ENCODE measurements at regions of chr22 and their contacts with region 1.

Region 1: DNA sequence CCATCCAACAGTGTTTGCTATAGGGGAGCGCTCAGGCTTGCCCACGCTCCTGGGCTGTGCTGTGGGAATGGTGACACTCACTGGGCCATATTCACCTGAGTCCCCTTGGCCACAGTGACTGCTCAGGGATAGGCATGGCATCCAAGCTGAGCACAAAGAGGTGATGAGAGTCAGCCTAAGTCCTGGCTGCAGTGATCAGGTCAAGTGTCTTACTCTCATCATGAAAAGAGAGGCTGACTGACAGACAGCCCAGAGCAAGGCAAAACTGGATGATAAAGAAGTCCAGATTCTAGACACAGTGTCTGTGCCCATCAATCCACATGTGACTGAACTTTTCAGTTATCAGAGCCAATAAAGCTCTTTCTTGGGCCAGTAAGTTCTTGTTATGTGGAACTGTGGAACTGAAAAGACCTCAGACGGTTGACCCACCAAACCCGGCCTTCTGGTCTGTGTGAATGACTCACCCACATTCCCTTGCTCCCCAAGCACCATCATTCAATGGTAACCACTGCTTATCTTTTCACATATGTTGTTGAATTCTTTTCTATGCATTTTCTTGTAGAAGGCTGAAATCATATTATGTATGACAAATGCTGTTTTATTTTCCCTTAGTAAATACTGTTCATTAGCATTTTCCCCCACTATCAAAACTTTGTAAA is 43.2 kb upstream of the YPEL1 start:
- DNase-seq: no peak
- H3K4me3 ChIP-seq: no peak overlapping the region
- H3K27ac ChIP-seq: no peak overlapping the region
- H3K4me1 ChIP-seq: peaks cover 6 to 10% (median 7%) of the 10 kb centered on the region in 4 donors
- H3K27me3 ChIP-seq: no peaks in the 10 kb centered on the region
- CTCF ChIP-seq: no peak
- EP300 ChIP-seq: no peak
- POLR2A ChIP-seq: no peak

Region 2: DNA sequence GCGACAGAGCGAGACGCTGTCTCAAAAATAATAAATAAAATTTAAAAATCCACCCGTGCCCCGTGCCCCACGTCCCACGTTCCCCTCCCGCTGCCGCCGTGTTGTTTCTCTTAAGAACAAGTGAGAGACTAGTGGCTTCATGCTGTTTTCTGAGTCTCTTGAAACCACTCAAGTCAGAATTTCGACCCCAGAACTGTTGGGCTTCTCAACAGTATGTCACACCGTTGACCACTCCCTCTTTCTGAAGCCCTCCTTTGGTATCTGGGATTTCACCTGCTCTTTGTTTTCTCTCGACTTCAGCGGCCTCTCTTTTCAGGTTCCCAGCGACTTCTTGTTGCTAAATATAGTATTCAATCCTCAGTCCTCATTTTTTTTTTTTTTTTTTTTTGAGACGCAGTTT is 112.0 kb before region 1 on chr22:
- intact Hi-C with region 1: no loop called
- DNase-seq: no peak
- H3K4me3 ChIP-seq: peak overlapping the region; percentile 73 to 85 (median 80)
- H3K27ac ChIP-seq: peak overlapping the region; percentile 87 to 92 (median 91)
- H3K4me1 ChIP-seq: peaks cover 8 to 22% (median 18%) of the 10 kb centered on the region in 4 donors
- H3K27me3 ChIP-seq: no peaks in the 10 kb centered on the region
- CTCF ChIP-seq: no peak
- EP300 ChIP-seq: no peak
- POLR2A ChIP-seq: no peak

Region 3: DNA sequence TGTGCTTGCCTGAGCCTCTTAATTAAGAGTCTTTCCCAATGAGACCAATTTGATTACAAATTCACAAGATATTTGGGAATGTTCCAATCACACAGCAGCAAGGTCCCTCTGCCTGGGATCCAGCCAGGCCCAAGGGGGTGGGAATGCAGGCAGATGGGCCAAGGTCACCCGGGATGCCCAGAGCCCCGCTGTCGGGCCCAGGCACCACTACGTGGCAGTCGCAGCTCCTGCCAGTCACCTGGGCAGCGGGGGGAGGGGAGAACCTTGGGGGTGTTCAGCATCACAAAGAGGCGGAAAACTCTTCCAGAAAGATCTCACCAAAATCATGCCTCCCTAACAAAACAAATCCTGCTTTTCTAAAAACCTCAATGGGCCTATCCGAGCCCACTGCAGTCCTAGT is 142.9 kb after region 1 on chr22:
- intact Hi-C with region 1: loop called (anchors 10 kb)
- DNase-seq: no peak
- H3K4me3 ChIP-seq: no peak overlapping the region
- H3K27ac ChIP-seq: no peak overlapping the region
- H3K4me1 ChIP-seq: peaks cover 7 to 20% (median 15%) of the 10 kb centered on the region in 4 donors
- H3K27me3 ChIP-seq: no peaks in the 10 kb centered on the region
- CTCF ChIP-seq: no peak
- EP300 ChIP-seq: no peak
- POLR2A ChIP-seq: no peak

Measured in esophagus muscularis mucosa (tissue), 4 donors.